Head of caudate nucleus (tissue), 42 donors: ENCODE measurements at regions of chr15 and their contacts with region 1.

Region 1: GRCh38 chr15:98421419-98422129 is 226.8 kb upstream of the IGF1R start:
- DNase-seq: peak; percentile 11 to 90 (median 76)

Region 2: DNA sequence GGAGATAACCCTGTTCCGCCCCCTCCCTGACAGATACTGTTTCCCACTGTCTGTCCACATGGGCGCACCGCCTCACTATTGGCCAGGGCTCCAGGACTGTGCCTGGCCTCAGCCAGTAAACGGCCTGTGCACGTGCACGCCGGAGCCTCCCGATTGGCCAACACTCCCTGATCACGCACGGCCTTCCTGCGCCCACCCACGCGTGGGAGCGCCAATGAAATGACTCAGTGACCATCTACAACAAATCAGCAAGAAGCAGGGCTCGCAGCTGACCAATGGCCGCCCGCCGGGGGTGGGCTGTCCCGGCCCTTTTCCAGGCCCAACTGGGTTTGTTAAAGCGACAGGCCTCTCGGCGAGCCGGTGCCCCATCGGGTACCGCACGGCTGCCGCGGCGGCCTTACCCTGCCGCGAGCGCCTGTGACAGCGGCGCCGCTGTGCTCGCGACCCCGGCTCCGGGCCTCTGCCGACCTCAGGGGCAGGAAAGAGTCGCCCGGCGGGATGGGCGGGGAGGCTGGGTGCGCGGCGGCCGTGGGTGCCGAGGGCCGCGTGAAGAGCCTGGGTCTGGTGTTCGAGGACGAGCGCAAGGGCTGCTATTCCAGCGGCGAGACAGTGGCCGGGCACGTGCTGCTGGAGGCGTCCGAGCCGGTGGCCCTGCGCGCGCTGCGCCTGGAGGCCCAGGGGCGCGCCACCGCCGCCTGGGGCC is 461.1 kb before region 1 on chr15 and contains the start of gene ARRDC4:
- intact Hi-C with region 1: no loop called
- DNase-seq: peak; percentile 100

Region 3: GRCh38 chr15:98311566-98312188 is 109.9 kb before region 1 on chr15:
- intact Hi-C with region 1: loop called (anchors 5 kb)
- DNase-seq: peak; percentile 11 to 95 (median 86)